H1 (cell line): ENCODE measurements at regions of chr9 and their contacts with region 1.

Region 1: GRCh38 chr9:127503947-127504782 is 52.9 kb downstream of the LRSAM1 start:
- DNase-seq: peak; percentile 88 to 92
- H3K4me3 ChIP-seq: no peak overlapping the region
- H3K27ac ChIP-seq: 0 out of 2 replicates have a peak overlapping the region, but pooled peaks have one; percentile 45
- H3K4me1 ChIP-seq: peaks cover 0 to 3% (median 0%) of the 10 kb centered on the region in 4 experiments; a peak in 2 of 7 replicates
- H3K27me3 ChIP-seq: no peaks in the 10 kb centered on the region
- CTCF ChIP-seq: peak in 2 of 3 experiments; percentile 98 to 99; a peak in 3 of 4 replicates
- EP300 ChIP-seq: no peak
- POLR2A ChIP-seq: no peak
- RAD21 ChIP-seq: peak; percentile 93 to 96

Region 2: GRCh38 chr9:127244609-127245601 is 259.3 kb before region 1 on chr9:
- CTCF ChIA-PET with region 1: no interaction called
- POLR2A ChIA-PET with region 1: no interaction called
- DNase-seq: peak; percentile 91 to 94
- H3K4me3 ChIP-seq: peak overlapping the region; percentile 73 to 84 (median 80)
- H3K27ac ChIP-seq: no peak overlapping the region; the same call in 1 of the 2 replicates
- H3K4me1 ChIP-seq: peaks cover 5 to 15% (median 11%) of the 10 kb centered on the region in 4 experiments; a peak in 5 of 7 replicates
- H3K27me3 ChIP-seq: no peaks in the 10 kb centered on the region
- CTCF ChIP-seq: no peak
- EP300 ChIP-seq: no peak
- POLR2A ChIP-seq: peak in 1 of 2 experiments; percentile 76; a peak in 2 of 3 replicates
- RAD21 ChIP-seq: no peak

Region 3: GRCh38 chr9:127489471-127490115 is 14.6 kb before region 1 on chr9:
- CTCF ChIA-PET with region 1: interaction called, 78 read pairs
- POLR2A ChIA-PET with region 1: interaction called, 5 read pairs
- DNase-seq: peak; percentile 64 to 79
- H3K4me3 ChIP-seq: no peak overlapping the region
- H3K27ac ChIP-seq: 0 out of 2 replicates have a peak overlapping the region, but pooled peaks have one; percentile 37
- H3K4me1 ChIP-seq: peaks cover 0 to 7% (median 2%) of the 10 kb centered on the region in 4 experiments; a peak in 5 of 7 replicates
- H3K27me3 ChIP-seq: no peaks in the 10 kb centered on the region
- CTCF ChIP-seq: peak; percentile 69 to 77 (median 72)
- EP300 ChIP-seq: no peak
- POLR2A ChIP-seq: no peak
- RAD21 ChIP-seq: peak; percentile 53 to 67

Region 4: GRCh38 chr9:127525401-127526187 is 21.4 kb after region 1 on chr9:
- CTCF ChIA-PET with region 1: interaction called, 88 read pairs
- POLR2A ChIA-PET with region 1: interaction called, 6 read pairs
- DNase-seq: no peak
- H3K4me3 ChIP-seq: no peak overlapping the region
- H3K27ac ChIP-seq: no peak overlapping the region
- H3K4me1 ChIP-seq: peaks cover 6 to 31% (median 11%) of the 10 kb centered on the region in 4 experiments
- H3K27me3 ChIP-seq: no peaks in the 10 kb centered on the region
- CTCF ChIP-seq: peak in 2 of 3 experiments; percentile 64 to 80; a peak in 3 of 4 replicates
- EP300 ChIP-seq: no peak
- POLR2A ChIP-seq: no peak
- RAD21 ChIP-seq: peak; percentile 54 to 61

Region 5: GRCh38 chr9:127545196-127546124 is 41.3 kb after region 1 on chr9:
- CTCF ChIA-PET with region 1: interaction called, 62 read pairs
- POLR2A ChIA-PET with region 1: interaction called, 4 read pairs
- DNase-seq: no peak
- H3K4me3 ChIP-seq: no peak overlapping the region
- H3K27ac ChIP-seq: peak overlapping the region; percentile 18; the same call in 1 of the 2 replicates
- H3K4me1 ChIP-seq: peaks cover 0 to 20% (median 8%) of the 10 kb centered on the region in 4 experiments; a peak in 5 of 7 replicates
- H3K27me3 ChIP-seq: no peaks in the 10 kb centered on the region
- CTCF ChIP-seq: no peak
- EP300 ChIP-seq: no peak
- POLR2A ChIP-seq: no peak
- RAD21 ChIP-seq: no peak

Region 6: DNA sequence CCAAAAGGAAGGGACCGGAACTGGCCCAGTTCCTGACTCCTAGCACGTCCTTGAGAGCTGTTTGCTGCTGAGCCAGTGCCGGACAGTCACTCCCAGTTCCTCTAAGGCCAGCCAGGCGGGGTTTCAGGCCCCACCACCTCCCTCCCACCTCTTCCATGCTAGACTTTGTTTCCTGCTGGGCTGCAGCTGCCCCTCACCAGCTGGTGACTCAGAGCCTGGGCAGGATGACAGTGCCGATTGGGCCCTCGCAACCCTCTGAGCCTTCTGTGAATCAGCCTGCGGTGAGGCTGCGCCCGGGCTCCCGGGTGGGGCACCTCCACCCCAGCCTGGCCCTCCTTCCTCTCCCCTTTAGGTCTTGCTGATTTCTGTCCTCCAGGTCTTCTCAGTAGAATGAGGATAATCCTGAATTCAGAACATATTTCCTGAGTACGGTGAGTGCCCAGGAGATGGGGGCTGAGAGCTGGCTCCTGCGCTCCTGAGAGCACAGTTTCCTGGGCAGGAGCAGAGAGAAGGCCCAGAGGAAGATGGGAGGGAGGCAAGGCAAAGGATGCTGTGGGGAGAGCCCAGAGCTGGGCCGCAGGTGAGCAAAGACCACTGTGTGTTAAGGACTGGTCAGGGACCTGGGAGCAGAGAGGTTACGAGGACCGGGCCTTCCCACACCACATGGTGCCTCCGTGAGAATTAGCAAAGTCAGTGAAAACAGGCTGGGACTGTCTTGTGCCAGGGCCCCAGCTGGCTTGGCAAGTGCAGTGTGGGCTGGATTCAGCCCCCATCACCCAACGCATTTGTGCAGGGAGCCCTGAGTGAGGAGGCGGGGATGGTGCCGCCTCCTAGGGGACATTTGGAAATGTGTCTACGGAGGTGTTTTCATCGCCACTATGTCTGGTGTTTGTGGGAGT is 75.0 kb after region 1 on chr9:
- CTCF ChIA-PET with region 1: interaction called, 193 read pairs
- POLR2A ChIA-PET with region 1: no interaction called
- DNase-seq: no peak
- H3K4me3 ChIP-seq: no peak overlapping the region
- H3K27ac ChIP-seq: no peak overlapping the region
- H3K4me1 ChIP-seq: peaks cover 0 to 11% (median 8%) of the 10 kb centered on the region in 4 experiments; a peak in 6 of 7 replicates
- H3K27me3 ChIP-seq: no peaks in the 10 kb centered on the region
- CTCF ChIP-seq: peak; percentile 50 to 56 (median 50)
- EP300 ChIP-seq: no peak
- POLR2A ChIP-seq: no peak
- RAD21 ChIP-seq: peak; percentile 38 to 56; a peak in 3 of 4 replicates

Region 7: GRCh38 chr9:127697575-127697974 is 193.4 kb after region 1 on chr9:
- CTCF ChIA-PET with region 1: no interaction called
- POLR2A ChIA-PET with region 1: no interaction called
- DNase-seq: no peak
- H3K4me3 ChIP-seq: no peak overlapping the region
- H3K27ac ChIP-seq: no peak overlapping the region
- H3K4me1 ChIP-seq: no peaks in the 10 kb centered on the region
- H3K27me3 ChIP-seq: no peaks in the 10 kb centered on the region
- CTCF ChIP-seq: no peak
- EP300 ChIP-seq: no peak
- POLR2A ChIP-seq: no peak
- RAD21 ChIP-seq: no peak